Thyroid gland (tissue), 4 donors: ENCODE measurements at regions of chr15 and their contacts with region 1.

Region 1: DNA sequence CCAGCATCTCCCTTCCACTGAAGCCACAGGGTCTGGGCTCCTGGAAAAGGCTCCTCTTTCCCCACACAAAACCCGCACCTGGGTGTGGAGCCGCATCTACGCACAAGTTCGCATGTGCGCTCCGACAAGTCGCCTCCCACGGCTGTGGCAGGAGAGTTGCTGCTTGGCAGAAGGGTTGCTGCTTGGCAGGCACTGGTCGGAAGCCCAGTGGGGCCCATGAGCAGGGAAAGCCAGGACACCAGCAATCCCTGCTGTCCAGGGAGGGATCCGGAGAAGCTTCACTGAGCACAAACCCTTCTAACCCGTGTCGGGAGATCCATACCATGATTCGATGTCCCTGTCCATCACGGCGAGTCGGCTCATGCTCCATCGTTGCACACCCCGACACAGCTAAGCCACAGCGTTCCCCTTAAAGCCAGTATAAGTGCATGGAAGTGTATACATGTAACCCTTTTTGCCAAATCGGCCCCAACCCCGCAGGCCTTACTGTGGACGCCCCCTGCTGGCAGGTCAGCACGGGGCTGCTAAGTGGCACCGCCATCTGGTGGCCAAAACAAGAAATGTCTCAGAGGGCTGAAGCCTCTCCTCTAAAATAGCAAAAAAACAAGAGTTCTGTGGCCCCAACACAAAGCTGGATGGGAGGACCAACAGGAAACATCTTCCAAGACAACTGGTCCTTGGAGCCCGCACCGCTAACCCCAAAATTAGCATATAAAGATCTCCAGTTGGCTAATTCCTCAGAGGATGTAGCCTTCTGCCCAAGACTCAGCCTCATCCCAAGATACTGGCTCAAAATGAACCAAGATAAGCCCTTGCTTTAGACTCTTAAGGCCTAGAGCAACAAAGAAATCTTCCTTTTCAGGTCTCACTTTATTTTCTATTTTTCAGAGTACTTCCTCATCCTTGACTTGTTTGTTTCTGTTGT is 8.3 kb downstream of the ANKRD63 start:
- DNase-seq: peak; percentile 73 to 84
- H3K4me3 ChIP-seq: no peak overlapping the region
- H3K27ac ChIP-seq: no peak overlapping the region
- H3K4me1 ChIP-seq: peaks cover 7 to 31% of the 10 kb centered on the region in 2 donors
- H3K27me3 ChIP-seq: no peaks in the 10 kb centered on the region
- CTCF ChIP-seq: peak; percentile 99 to 100 (median 100)
- POLR2A ChIP-seq: no peak

Region 2: GRCh38 chr15:40044717-40045571 is 229.7 kb before region 1 on chr15:
- intact Hi-C with region 1: loop called (anchors 5 kb)
- DNase-seq: peak; percentile 95
- H3K4me3 ChIP-seq: no peak overlapping the region
- H3K27ac ChIP-seq: peak overlapping the region; percentile 79 to 84 (median 81)
- H3K4me1 ChIP-seq: peaks cover 33 to 65% of the 10 kb centered on the region in 2 donors
- H3K27me3 ChIP-seq: no peaks in the 10 kb centered on the region
- CTCF ChIP-seq: peak; percentile 53 to 99 (median 96)
- POLR2A ChIP-seq: no peak

Region 3: GRCh38 chr15:40219801-40220200 is 54.8 kb before region 1 on chr15:
- intact Hi-C with region 1: loop called (anchors 2 kb)
- DNase-seq: no peak
- H3K4me3 ChIP-seq: no peak overlapping the region
- H3K27ac ChIP-seq: no peak overlapping the region
- H3K4me1 ChIP-seq: no peaks in the 10 kb centered on the region
- H3K27me3 ChIP-seq: no peaks in the 10 kb centered on the region
- CTCF ChIP-seq: no peak
- POLR2A ChIP-seq: no peak